ENCODE measurements at regions of chr2 and their contacts with region 1.

Region 1: DNA sequence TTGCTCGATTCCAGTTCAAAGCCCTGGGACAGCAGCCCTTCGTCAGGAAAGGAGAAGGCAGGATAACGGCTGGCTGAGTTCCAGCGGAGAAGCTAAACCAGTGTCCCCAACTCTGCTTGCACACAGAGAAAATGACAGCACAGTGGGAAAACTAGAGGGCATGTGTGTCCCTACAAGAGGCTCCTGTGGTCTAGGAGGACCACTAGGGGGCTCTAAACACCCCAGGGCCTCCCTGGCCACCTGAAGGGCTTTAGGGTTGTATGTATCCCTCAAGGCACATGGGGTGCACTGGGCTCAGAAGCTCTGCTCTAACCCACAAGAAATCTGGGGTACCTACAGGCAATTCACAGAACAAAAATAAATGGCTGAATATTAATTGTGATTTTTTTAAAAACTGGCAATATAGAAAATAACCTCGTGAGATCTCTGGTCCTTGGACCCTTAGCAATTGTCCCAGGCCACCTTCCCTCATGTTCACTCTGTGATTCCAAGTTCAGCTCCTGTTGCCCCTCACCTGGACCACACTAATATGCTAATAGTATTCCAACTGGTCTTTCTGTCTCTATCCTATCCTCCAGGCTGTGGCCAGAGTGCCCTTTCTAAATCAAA is 17.5 kb downstream of the STAT1 start:
- DNase-seq: peak; percentile 34
- H3K4me3 Mint-ChIP-seq: no peak overlapping the region
- H3K27ac Mint-ChIP-seq: peak overlapping the region; percentile 71
- H3K4me1 Mint-ChIP-seq: peaks cover 80% of the 10 kb centered on the region
- H3K27me3 Mint-ChIP-seq: no peaks in the 10 kb centered on the region

Region 2: GRCh38 chr2:190853531-190854383 is 142.7 kb before region 1 on chr2:
- CTCF ChIA-PET with region 1: no interaction called
- POLR2A ChIA-PET with region 1: no interaction called
- DNase-seq: no peak
- H3K4me3 Mint-ChIP-seq: no peak overlapping the region
- H3K27ac Mint-ChIP-seq: no peak overlapping the region
- H3K4me1 Mint-ChIP-seq: peaks cover 1% of the 10 kb centered on the region
- H3K27me3 Mint-ChIP-seq: no peaks in the 10 kb centered on the region

Region 3: GRCh38 chr2:190984595-190984994 is 11.8 kb before region 1 on chr2:
- CTCF ChIA-PET with region 1: interaction called, 9 read pairs
- POLR2A ChIA-PET with region 1: interaction called, 14 read pairs
- DNase-seq: peak; percentile 31
- H3K4me3 Mint-ChIP-seq: no peak overlapping the region
- H3K27ac Mint-ChIP-seq: peak overlapping the region; percentile 67
- H3K4me1 Mint-ChIP-seq: peaks cover 66% of the 10 kb centered on the region
- H3K27me3 Mint-ChIP-seq: no peaks in the 10 kb centered on the region

Region 4: DNA sequence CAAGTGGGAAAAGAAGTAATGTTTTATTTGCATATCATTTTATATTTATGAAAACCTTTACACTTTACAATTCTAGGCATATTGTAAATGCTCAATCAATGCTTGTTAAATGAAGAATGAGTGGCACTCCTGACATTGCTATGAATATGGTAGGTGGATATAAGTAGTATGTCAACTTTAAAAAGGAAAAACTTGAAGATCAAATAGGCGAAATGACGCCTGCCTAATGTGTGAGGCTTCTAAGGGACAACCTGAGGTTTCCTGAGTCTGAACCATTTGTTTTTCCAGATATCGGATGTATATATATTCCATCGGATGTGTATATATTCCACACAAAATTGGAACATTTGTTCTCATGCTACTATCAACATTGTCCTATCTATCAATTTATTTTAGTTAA is 152.9 kb after region 1 on chr2:
- CTCF ChIA-PET with region 1: no interaction called
- POLR2A ChIA-PET with region 1: no interaction called
- DNase-seq: no peak
- H3K4me3 Mint-ChIP-seq: peak overlapping the region; percentile 94
- H3K27ac Mint-ChIP-seq: peak overlapping the region; percentile 97
- H3K4me1 Mint-ChIP-seq: peaks cover 70% of the 10 kb centered on the region
- H3K27me3 Mint-ChIP-seq: no peaks in the 10 kb centered on the region

Measured in activated CD4-positive, alpha-beta memory T cell treated with anti-CD3 and anti-CD28 coated beads, Interleukin-2, amount 10 ng/mL, durations not matched to agents 7 days and 5 days (primary cell).